Naive thymus-derived CD4-positive, alpha-beta T cell (primary cell): ENCODE measurements at regions of chr22 and their contacts with region 1.

Region 1: GRCh38 chr22:41091132-41092022 is 1.0 kb upstream of the EP300 start:
- DNase-seq: peak; percentile 98 to 99 (median 99)
- ATAC-seq: peak; percentile 95
- H3K4me3 ChIP-seq: peak overlapping the region; percentile 99
- H3K4me3 Mint-ChIP-seq: peak overlapping the region; percentile 91 to 100 (median 98)
- H3K27ac ChIP-seq: peak overlapping the region; percentile 99
- H3K27ac Mint-ChIP-seq: peak overlapping the region; percentile 99 to 100 (median 99)
- H3K4me1 ChIP-seq: peaks cover 4 to 5% of the 10 kb centered on the region in 2 donors
- H3K4me1 Mint-ChIP-seq: peaks cover 23 to 35% (median 27%) of the 10 kb centered on the region in 7 donors
- H3K27me3 ChIP-seq: no peaks in the 10 kb centered on the region
- H3K27me3 Mint-ChIP-seq: peaks cover 0 to 2% (median 0%) of the 10 kb centered on the region in 5 donors

Region 2: DNA sequence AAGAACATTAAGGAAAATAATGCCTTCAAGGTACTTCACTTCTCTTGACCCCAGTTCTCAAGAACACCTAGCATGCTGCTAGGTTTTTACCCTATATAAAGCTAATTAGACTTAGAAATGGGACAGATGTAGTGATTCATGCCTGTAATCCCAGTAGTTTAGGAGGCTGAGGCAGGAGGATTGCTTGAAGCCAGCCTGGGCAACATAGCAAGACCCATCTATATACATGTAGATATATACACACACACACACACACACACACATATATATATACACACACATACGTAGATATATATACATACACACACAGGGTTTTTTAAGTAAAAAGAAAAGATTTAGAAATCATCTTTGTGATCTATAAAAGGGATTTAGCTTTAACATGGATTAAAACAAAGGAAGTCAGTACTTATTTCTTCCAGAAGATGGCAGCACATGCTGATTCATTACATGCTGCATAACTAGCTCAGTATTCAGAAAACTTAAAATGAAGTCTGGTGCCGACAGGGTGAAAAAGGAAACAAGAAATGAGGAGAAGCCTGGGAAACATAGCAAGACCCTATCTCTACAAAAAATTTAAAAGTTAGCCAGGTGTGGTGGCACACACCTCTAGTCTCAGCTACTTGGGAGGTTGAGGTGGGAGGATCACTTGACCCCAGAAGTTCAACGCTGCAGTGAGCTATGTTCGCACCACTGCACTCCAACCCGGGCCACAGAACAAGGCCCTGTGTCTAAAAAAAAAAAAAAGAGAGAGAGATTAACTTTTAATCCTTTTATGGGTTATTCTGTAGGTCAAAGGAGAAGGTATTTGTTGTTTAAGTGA is 168.7 kb before region 1 on chr22:
- CTCF ChIA-PET with region 1: interaction called, 5 read pairs
- POLR2A ChIA-PET with region 1: interaction called, 10 read pairs
- intact Hi-C with region 1: loop called (anchors 1 kb)
- DNase-seq: peak in 7 of 9 donors; percentile 51 to 73 (median 67)
- ATAC-seq: peak; percentile 92
- H3K4me3 ChIP-seq: no peak overlapping the region
- H3K4me3 Mint-ChIP-seq: peak overlapping the region in 9 of 10 donors; percentile 1 to 79 (median 37)
- H3K27ac ChIP-seq: peak overlapping the region; percentile 2
- H3K27ac Mint-ChIP-seq: peak overlapping the region in 7 of 9 donors; percentile 47 to 88 (median 68)
- H3K4me1 ChIP-seq: peaks cover 0 to 4% of the 10 kb centered on the region in 2 donors
- H3K4me1 Mint-ChIP-seq: peaks cover 3 to 10% (median 5%) of the 10 kb centered on the region in 7 donors
- H3K27me3 ChIP-seq: no peaks in the 10 kb centered on the region
- H3K27me3 Mint-ChIP-seq: no peaks in the 10 kb centered on the region

Region 3: GRCh38 chr22:41001722-41002122 is 89.7 kb before region 1 on chr22:
- CTCF ChIA-PET with region 1: no interaction called
- POLR2A ChIA-PET with region 1: no interaction called
- intact Hi-C with region 1: no loop called
- DNase-seq: no peak
- ATAC-seq: no peak
- H3K4me3 ChIP-seq: no peak overlapping the region
- H3K4me3 Mint-ChIP-seq: no peak overlapping the region
- H3K27ac ChIP-seq: no peak overlapping the region
- H3K27ac Mint-ChIP-seq: no peak overlapping the region
- H3K4me1 ChIP-seq: no peaks in the 10 kb centered on the region
- H3K4me1 Mint-ChIP-seq: peaks cover 0 to 4% (median 0%) of the 10 kb centered on the region in 7 donors
- H3K27me3 ChIP-seq: no peaks in the 10 kb centered on the region
- H3K27me3 Mint-ChIP-seq: peaks cover 0 to 8% (median 0%) of the 10 kb centered on the region in 5 donors

Region 4: GRCh38 chr22:41106122-41106968 is 15.0 kb after region 1 on chr22:
- CTCF ChIA-PET with region 1: interaction called, 3 read pairs
- POLR2A ChIA-PET with region 1: interaction called, 10 read pairs
- intact Hi-C with region 1: loop called in 1 of 2 experiments (anchors 1 kb)
- DNase-seq: no peak
- ATAC-seq: no peak
- H3K4me3 ChIP-seq: no peak overlapping the region
- H3K4me3 Mint-ChIP-seq: peak overlapping the region in 8 of 10 donors; percentile 5 to 68 (median 32)
- H3K27ac ChIP-seq: peak overlapping the region; percentile 26
- H3K27ac Mint-ChIP-seq: peak overlapping the region; percentile 8 to 85 (median 68)
- H3K4me1 ChIP-seq: peaks cover 20 to 34% of the 10 kb centered on the region in 2 donors
- H3K4me1 Mint-ChIP-seq: peaks cover 37 to 81% (median 55%) of the 10 kb centered on the region in 7 donors
- H3K27me3 ChIP-seq: no peaks in the 10 kb centered on the region
- H3K27me3 Mint-ChIP-seq: no peaks in the 10 kb centered on the region

Region 5: DNA sequence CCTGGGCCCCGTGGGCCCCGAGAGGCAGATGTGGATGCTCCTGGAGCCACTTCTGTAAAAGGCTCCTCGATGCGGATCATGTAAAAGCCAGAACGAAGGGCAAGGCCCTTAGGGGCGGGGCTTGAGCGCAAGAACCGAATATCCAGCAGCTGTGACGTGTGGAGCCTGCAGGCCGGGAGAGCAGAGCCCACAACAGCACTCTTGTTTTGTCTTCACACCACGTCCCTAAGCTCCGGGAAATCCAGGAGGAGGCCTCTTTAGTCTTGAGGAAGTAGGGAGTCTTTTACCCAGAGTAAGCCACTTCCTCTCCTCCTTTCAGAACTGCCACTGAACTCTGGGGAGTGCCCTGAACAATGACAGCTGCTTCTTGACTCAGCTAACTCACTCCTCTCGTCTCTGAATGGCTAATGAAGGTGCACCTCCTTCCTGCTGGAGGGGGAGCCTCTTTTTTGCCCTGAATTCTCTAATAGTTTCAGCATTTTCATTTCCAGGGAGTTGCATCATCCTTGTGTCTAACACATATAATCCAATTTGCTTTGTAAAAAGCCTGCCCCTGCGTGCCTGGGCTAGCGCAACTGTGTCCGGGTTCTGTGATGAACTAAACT is 126.3 kb after region 1 on chr22:
- CTCF ChIA-PET with region 1: no interaction called
- POLR2A ChIA-PET with region 1: interaction called, 3 read pairs
- intact Hi-C with region 1: loop called in 1 of 2 experiments (anchors 1 kb)
- DNase-seq: peak in 8 of 9 donors; percentile 24 to 50 (median 41)
- ATAC-seq: peak; percentile 97
- H3K4me3 ChIP-seq: no peak overlapping the region
- H3K4me3 Mint-ChIP-seq: peak overlapping the region; percentile 20 to 76 (median 61)
- H3K27ac ChIP-seq: peak overlapping the region; percentile 47
- H3K27ac Mint-ChIP-seq: peak overlapping the region in 8 of 9 donors; percentile 32 to 89 (median 63)
- H3K4me1 ChIP-seq: peaks cover 4 to 14% of the 10 kb centered on the region in 2 donors
- H3K4me1 Mint-ChIP-seq: peaks cover 15 to 33% (median 19%) of the 10 kb centered on the region in 7 donors
- H3K27me3 ChIP-seq: no peaks in the 10 kb centered on the region
- H3K27me3 Mint-ChIP-seq: no peaks in the 10 kb centered on the region

Region 6: DNA sequence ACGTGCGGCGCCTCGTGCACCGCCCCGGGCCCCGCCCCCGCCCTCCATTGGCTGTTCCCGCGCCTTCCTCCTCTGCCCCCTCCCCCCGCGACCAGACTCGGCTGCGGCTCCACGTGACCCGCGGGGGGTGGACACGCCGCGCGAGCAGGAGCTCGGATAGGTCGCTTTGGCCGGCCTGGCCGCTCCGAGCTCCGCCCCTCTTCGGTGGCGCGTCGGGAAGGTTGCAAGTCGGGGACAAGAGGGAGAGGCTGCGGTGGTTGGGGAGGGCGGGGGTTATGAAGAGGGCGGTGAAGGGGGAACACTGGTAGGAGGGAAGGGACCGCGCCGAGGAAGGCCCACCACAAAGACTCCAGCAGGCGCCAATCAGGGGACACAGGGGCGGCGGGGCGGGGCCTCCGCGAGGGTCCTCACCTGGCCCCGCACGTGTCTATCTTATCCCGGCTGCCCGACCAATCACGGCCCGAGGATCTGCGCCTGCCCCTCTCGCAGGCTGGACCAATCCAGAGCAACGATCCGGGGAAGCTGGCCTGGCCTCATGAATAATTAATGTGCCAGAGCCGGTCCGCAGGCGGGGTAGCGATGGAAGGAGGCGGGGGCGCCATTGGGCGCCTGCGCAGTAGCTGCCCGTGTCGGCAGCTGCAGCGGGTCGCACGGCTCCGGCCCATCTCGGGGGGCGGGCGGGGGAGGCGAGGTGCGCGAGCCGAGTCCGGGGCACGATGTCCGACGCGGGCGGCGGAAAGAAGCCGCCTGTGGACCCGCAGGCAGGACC is 290.1 kb after region 1 on chr22 and contains the start of gene TEF:
- CTCF ChIA-PET with region 1: interaction called, 3 read pairs
- POLR2A ChIA-PET with region 1: interaction called, 4 read pairs
- intact Hi-C with region 1: loop called (anchors 1 to 5 kb)
- DNase-seq: peak; percentile 97 to 99 (median 98)
- ATAC-seq: peak; percentile 89
- H3K4me3 ChIP-seq: peak within 1 kb of the TSS; percentile 86
- H3K4me3 Mint-ChIP-seq: peak within 1 kb of the TSS; percentile 90 to 97 (median 94)
- H3K27ac ChIP-seq: peak within 1 kb of the TSS; percentile 95
- H3K27ac Mint-ChIP-seq: peak within 1 kb of the TSS; percentile 94 to 99 (median 98)
- H3K4me1 ChIP-seq: peaks cover 5 to 14% of the 10 kb centered on the region in 2 donors
- H3K4me1 Mint-ChIP-seq: peaks cover 5 to 29% (median 19%) of the 10 kb centered on the region in 7 donors
- H3K27me3 ChIP-seq: no peaks in the 10 kb centered on the region
- H3K27me3 Mint-ChIP-seq: peaks cover 0 to 5% (median 0%) of the 10 kb centered on the region in 5 donors
- total RNA-seq, gene TEF: 3.8 to 8.4 (median 6.2) TPM

Region 7: DNA sequence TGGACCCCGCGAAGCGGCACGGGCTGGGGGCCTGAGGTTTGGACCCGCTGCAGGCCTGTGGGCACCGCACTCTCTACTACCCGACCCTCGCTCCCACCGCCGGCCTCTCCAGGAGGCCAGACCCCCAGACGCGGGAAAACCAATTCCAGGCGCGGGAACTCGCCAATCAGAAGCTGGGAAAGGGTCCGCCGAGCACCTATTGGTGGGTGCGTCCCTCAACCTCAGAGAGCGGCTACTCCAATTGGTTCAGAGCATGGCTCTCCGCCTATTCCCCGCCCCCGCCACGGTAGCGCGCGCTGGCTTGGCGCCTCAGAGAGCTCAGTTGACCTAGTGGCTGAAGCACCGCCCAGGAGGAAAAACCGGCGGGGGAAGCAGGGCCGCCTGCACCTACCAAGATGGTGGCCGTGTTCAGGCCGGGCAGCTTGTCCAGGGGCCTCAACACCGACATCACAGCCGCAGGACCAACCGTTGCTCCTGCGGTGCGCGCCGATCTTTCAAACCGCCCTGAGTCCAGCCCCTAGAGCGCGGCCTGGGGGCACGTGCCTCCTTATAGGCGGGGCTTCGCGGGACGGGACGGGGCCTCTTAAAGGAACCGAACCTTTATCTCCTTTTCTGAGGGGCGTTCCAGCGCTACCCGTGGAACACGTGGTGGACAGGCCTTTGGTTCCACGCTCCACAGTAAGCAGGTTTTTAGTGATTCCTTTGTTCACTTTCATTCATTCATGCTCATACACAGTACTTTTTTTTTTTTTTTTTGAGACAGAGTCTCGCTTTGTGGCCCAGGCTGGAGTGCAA is 855.4 kb after region 1 on chr22 and contains the start of gene CENPM:
- CTCF ChIA-PET with region 1: no interaction called
- POLR2A ChIA-PET with region 1: no interaction called
- intact Hi-C with region 1: loop called in 1 of 2 experiments (anchors 10 kb)
- DNase-seq: peak; percentile 71 to 94 (median 84)
- ATAC-seq: peak; percentile 97
- H3K4me3 ChIP-seq: peak within 1 kb of the TSS; percentile 82
- H3K4me3 Mint-ChIP-seq: peak within 1 kb of the TSS; percentile 83 to 93 (median 91)
- H3K27ac ChIP-seq: peak within 1 kb of the TSS; percentile 37
- H3K27ac Mint-ChIP-seq: peak within 1 kb of the TSS in 7 of 9 donors; percentile 63 to 93 (median 68)
- H3K4me1 ChIP-seq: peaks cover 3 to 13% of the 10 kb centered on the region in 2 donors
- H3K4me1 Mint-ChIP-seq: peaks cover 0 to 41% (median 10%) of the 10 kb centered on the region in 7 donors
- H3K27me3 ChIP-seq: no peaks in the 10 kb centered on the region
- H3K27me3 Mint-ChIP-seq: no peaks in the 10 kb centered on the region
- total RNA-seq, gene CENPM: 5.1 to 51.1 (median 10.8) TPM